Upper lobe of right lung (tissue), 1 donor: ENCODE measurements at regions of chr1 and their contacts with region 1.

Region 1: GRCh38 chr1:151934048-151934493 is 24.8 kb upstream of the THEM4 start:
- DNase-seq: no peak
- ATAC-seq: peak; percentile 97
- H3K4me3 ChIP-seq: no peak overlapping the region
- H3K27ac ChIP-seq: no peak overlapping the region
- H3K4me1 ChIP-seq: no peaks in the 10 kb centered on the region
- H3K27me3 ChIP-seq: no peaks in the 10 kb centered on the region
- CTCF ChIP-seq: peak; percentile 92

Region 2: DNA sequence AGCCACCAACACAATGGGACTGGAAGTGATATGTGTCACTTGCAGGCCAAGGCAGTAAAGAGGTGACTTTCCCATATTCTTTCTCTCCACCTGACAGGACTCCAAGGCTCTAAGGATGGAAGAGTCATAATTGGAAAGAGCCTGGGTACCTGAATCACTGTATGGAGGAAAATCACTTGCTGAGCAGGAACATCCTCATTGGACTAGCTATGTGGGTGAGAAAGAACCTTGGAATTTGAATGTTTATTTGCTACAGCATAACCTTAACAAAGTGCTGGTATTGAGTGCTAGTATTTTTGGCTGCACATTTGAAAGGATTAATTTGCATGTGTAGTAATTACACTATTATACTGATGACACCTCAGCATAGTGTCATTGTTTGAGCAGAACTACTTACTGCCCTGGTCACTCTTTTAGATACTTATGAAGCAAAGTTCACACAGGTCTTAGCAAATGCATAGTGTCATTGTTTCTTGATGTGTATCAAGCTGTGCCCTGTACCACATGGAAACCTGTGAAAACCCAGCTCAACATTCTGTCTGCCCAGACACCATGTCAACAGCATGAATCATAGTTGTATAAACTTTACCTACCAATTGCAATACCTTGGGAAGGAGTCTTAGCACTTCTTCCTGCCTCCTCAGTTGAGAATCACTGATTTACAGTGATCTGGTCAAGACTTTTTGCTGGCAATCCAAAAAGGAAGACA is 64.7 kb after region 1 on chr1:
- intact Hi-C with region 1: loop called (anchors 2 kb)
- DNase-seq: no peak
- ATAC-seq: no peak
- H3K4me3 ChIP-seq: no peak overlapping the region
- H3K27ac ChIP-seq: no peak overlapping the region
- H3K4me1 ChIP-seq: peaks cover 14% of the 10 kb centered on the region
- H3K27me3 ChIP-seq: no peaks in the 10 kb centered on the region
- CTCF ChIP-seq: no peak